ENCODE measurements at regions of chr13 and their contacts with region 1.

Region 1: GRCh38 chr13:113809934-113810333 is 50.9 kb downstream of the TMEM255B start:
- DNase-seq: peak in 1 of 3 donors; percentile 7
- ATAC-seq: no peak
- H3K4me3 ChIP-seq: no peak overlapping the region
- H3K27ac ChIP-seq: no peak overlapping the region
- H3K4me1 ChIP-seq: no peaks in the 10 kb centered on the region
- H3K27me3 ChIP-seq: no peaks in the 10 kb centered on the region

Region 2: GRCh38 chr13:113758651-113759524 is 51.0 kb before region 1 on chr13 and contains the start of gene TMEM255B:
- intact Hi-C with region 1: no loop called
- DNase-seq: peak; percentile 85 to 95 (median 94)
- ATAC-seq: peak; percentile 98
- H3K4me3 ChIP-seq: peak within 1 kb of the TSS; percentile 93
- H3K27ac ChIP-seq: peak within 1 kb of the TSS; percentile 32
- H3K4me1 ChIP-seq: no peaks in the 10 kb centered on the region
- H3K27me3 ChIP-seq: no peaks in the 10 kb centered on the region
- total RNA-seq, gene TMEM255B: 6.2 to 9.9 (median 8.8) TPM

Region 3: GRCh38 chr13:113851826-113852535 is 42.0 kb after region 1 on chr13:
- intact Hi-C with region 1: loop called in 1 of 4 experiments (anchors 2 kb)
- DNase-seq: peak in 1 of 3 donors; percentile 31
- ATAC-seq: no peak
- H3K4me3 ChIP-seq: no peak overlapping the region
- H3K27ac ChIP-seq: no peak overlapping the region
- H3K4me1 ChIP-seq: peaks cover 31% of the 10 kb centered on the region
- H3K27me3 ChIP-seq: no peaks in the 10 kb centered on the region

Measured in right cardiac atrium (tissue), 5 donors.